B cell (primary cell): ENCODE measurements at regions of chr2 and their contacts with region 1.

Region 1: GRCh38 chr2:197240421-197241041 is 70.0 kb downstream of the ANKRD44 start:
- DNase-seq: peak; percentile 44
- ATAC-seq: peak; percentile 56
- H3K4me3 ChIP-seq: peak overlapping the region in 1 of 5 experiments; percentile 24
- H3K4me3 Mint-ChIP-seq: peak overlapping the region; percentile 57
- H3K27ac ChIP-seq: peak overlapping the region; percentile 31 to 80
- H3K27ac Mint-ChIP-seq: peak overlapping the region; percentile 90
- H3K4me1 ChIP-seq: peaks cover 71 to 82% of the 10 kb centered on the region in 2 donors
- H3K4me1 Mint-ChIP-seq: peaks cover 83% of the 10 kb centered on the region
- H3K27me3 ChIP-seq: no peaks in the 10 kb centered on the region
- H3K27me3 Mint-ChIP-seq: no peaks in the 10 kb centered on the region
- CTCF ChIP-seq: no peak

Region 2: DNA sequence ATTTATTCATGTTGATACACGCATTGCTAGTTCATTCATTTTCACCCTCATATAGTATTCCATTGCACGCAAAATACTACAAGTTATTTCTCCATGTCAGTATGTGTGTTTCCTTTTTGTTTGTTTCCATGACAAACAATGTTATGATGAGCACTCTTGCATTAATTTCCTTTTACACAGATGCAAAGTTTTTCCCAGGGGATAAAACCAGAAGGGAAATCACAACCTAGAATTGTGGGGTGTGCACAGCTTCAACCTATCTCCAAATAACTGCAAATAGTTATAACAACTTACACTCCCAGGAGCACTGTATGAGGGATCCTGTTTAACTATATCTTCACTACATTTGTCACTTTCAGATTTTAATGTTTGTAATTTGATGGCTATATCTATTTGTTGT is 17.1 kb before region 1 on chr2:
- CTCF ChIA-PET with region 1: interaction called, 3 read pairs
- POLR2A ChIA-PET with region 1: interaction called, 5 read pairs
- intact Hi-C with region 1: loop called (anchors 2 kb)
- DNase-seq: peak; percentile 57
- ATAC-seq: peak; percentile 53
- H3K4me3 ChIP-seq: peak overlapping the region in 1 of 5 experiments; percentile 4
- H3K4me3 Mint-ChIP-seq: peak overlapping the region; percentile 67
- H3K27ac ChIP-seq: peak overlapping the region in 1 of 2 donors; percentile 81
- H3K27ac Mint-ChIP-seq: peak overlapping the region; percentile 77
- H3K4me1 ChIP-seq: peaks cover 64 to 65% of the 10 kb centered on the region in 2 donors
- H3K4me1 Mint-ChIP-seq: peaks cover 76% of the 10 kb centered on the region
- H3K27me3 ChIP-seq: no peaks in the 10 kb centered on the region
- H3K27me3 Mint-ChIP-seq: no peaks in the 10 kb centered on the region
- CTCF ChIP-seq: no peak

Region 3: GRCh38 chr2:197273485-197273884 is 33.0 kb after region 1 on chr2:
- CTCF ChIA-PET with region 1: no interaction called
- POLR2A ChIA-PET with region 1: no interaction called
- intact Hi-C with region 1: no loop called
- DNase-seq: no peak
- ATAC-seq: no peak
- H3K4me3 ChIP-seq: no peak overlapping the region
- H3K4me3 Mint-ChIP-seq: no peak overlapping the region
- H3K27ac ChIP-seq: peak overlapping the region in 1 of 2 donors; percentile 74
- H3K27ac Mint-ChIP-seq: peak overlapping the region; percentile 3
- H3K4me1 ChIP-seq: peaks cover 72 to 78% of the 10 kb centered on the region in 2 donors
- H3K4me1 Mint-ChIP-seq: peaks cover 73% of the 10 kb centered on the region
- H3K27me3 ChIP-seq: no peaks in the 10 kb centered on the region
- H3K27me3 Mint-ChIP-seq: no peaks in the 10 kb centered on the region
- CTCF ChIP-seq: no peak

Region 4: DNA sequence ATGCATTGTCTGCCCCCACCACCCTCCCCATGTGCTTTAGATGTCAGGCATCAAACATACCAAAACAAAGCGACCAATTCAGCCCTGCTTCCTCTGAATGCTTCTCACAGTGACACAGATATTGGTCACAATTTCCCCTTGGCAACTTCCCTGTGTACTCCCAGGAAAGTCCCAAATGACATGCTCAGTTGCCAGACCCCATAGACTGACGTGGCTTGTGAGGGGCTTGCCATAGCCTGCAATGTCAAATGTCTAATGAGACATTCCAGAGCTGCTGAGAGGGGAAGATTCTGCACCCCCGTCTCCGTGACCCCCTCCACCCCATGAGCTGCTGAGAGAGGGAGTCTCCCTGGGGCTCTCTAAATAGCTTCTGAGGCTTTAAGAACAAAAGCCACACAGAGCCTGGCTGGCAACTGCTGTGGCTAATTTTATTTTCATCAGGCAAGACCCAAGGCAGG is 387.5 kb after region 1 on chr2:
- CTCF ChIA-PET with region 1: no interaction called
- POLR2A ChIA-PET with region 1: no interaction called
- intact Hi-C with region 1: no loop called
- DNase-seq: no peak
- ATAC-seq: no peak
- H3K4me3 ChIP-seq: no peak overlapping the region
- H3K4me3 Mint-ChIP-seq: no peak overlapping the region
- H3K27ac ChIP-seq: no peak overlapping the region
- H3K27ac Mint-ChIP-seq: no peak overlapping the region
- H3K4me1 ChIP-seq: no peaks in the 10 kb centered on the region
- H3K4me1 Mint-ChIP-seq: no peaks in the 10 kb centered on the region
- H3K27me3 ChIP-seq: peaks cover 0 to 6% (median 0%) of the 10 kb centered on the region in 4 experiments
- H3K27me3 Mint-ChIP-seq: peaks cover 7% of the 10 kb centered on the region
- CTCF ChIP-seq: no peak